GM10248 (cell line): ENCODE measurements at regions of chr3 and their contacts with region 1.

Region 1: DNA sequence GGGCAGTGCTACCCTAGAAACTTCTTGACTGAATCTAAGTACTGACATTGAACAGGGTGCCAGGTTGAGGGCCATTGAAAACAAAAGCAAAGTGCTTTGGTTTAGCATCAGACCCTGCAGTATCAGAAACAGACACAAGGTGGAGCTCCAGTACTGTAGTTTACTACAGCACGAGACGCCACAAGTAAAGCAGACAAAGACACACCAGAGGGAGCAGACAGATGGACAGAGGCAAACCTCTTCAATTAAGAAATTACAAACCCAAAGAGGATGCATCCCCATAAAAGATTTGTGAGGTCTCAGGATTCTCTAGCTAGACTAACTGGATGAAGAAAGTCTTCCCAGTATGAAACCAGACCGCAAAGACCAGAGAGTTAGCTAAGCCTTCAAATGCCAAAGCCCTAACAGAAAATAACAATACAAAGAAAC is 16.6 kb downstream of the TOP2B start:
- DNase-seq: peak; percentile 59
- CTCF ChIP-seq: peak; percentile 77

Region 2: DNA sequence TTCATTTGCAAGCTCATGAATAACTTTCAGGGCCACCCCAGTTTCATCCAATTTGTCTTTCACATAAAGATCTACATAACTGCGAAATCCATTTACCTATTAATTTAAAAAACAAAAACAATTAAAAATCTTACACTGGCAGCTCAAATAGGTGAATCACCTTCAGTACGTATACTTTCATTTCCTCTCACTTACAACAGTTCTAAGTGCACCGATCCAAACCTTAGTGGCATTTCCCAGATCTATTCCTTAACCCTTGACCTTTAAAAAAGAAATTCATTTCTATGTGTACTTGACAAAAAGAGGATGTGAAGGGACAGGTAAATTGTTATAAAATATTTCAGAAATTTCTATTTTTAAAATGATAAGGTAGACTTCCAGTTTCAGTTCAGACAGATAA is 14.2 kb before region 1 on chr3:
- CTCF ChIA-PET with region 1: interaction called, 29 read pairs
- POLR2A ChIA-PET with region 1: no interaction called
- DNase-seq: no peak
- CTCF ChIP-seq: no peak

Region 3: GRCh38 chr3:25664810-25665314 is 16.7 kb after region 1 on chr3 and contains the start of gene TOP2B:
- CTCF ChIA-PET with region 1: interaction called, 22 read pairs
- POLR2A ChIA-PET with region 1: no interaction called
- DNase-seq: peak; percentile 96
- CTCF ChIP-seq: no peak

Region 4: DNA sequence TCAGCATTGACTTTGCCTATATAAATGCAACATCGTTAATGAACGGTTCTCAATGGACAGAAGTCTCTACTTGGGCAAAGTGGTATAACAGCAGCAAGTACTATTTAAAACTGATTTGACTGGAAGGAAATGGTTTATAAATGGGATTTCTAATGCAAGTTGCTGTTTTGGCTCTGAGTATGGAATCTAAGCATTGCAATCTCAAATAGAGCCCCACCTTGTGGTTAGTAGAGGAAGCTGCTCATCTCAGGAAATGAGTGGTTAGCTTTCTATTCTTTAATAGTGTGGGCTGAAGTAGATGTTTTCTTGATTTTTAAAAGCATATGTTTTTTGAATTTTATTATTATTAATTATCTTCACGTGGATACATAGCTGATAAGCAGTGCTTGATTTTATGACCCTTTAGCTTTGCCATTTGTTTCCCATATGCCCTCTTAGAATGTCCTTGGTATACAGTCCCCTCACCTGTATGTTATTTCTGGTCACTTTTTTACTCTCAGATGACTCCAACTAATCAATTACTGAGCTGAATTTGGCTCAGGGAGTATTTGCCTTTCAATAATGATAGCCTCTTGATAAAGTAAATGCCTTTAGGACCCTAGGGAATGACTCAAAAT is 208.9 kb after region 1 on chr3:
- CTCF ChIA-PET with region 1: interaction called, 96 read pairs
- POLR2A ChIA-PET with region 1: no interaction called
- DNase-seq: peak; percentile 65
- CTCF ChIP-seq: peak; percentile 69

Region 5: GRCh38 chr3:25910997-25911396 is 262.9 kb after region 1 on chr3:
- CTCF ChIA-PET with region 1: interaction called, 12 read pairs
- POLR2A ChIA-PET with region 1: no interaction called
- DNase-seq: no peak
- CTCF ChIP-seq: peak; percentile 44